Aorta (tissue), 5 donors: ENCODE measurements at regions of chr3 and their contacts with region 1.

Region 1: DNA sequence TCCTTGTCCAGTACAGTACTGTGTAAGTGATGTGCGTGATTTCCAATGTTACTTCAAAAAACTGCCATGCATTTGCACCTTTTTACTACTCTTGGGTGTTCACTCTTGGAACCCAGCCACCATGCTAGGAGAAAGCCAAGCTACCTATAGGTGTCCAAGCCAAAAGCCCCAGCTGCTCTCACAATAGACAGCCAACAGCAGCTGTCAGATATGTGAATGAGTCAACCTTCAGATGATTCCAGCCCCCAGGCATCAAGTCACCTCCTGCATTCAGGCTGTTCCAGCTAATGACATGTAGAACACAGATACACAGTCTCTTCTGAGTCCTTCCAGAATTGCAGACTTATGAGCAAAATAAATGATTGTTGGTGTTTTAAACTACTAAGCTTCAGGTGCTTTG is 417.7 kb upstream of the TGFBR2 start:
- DNase-seq: no peak
- ATAC-seq: no peak
- H3K4me3 ChIP-seq: no peak overlapping the region
- H3K27ac ChIP-seq: no peak overlapping the region
- H3K4me1 ChIP-seq: no peaks in the 10 kb centered on the region
- H3K27me3 ChIP-seq: no peaks in the 10 kb centered on the region

Region 2: DNA sequence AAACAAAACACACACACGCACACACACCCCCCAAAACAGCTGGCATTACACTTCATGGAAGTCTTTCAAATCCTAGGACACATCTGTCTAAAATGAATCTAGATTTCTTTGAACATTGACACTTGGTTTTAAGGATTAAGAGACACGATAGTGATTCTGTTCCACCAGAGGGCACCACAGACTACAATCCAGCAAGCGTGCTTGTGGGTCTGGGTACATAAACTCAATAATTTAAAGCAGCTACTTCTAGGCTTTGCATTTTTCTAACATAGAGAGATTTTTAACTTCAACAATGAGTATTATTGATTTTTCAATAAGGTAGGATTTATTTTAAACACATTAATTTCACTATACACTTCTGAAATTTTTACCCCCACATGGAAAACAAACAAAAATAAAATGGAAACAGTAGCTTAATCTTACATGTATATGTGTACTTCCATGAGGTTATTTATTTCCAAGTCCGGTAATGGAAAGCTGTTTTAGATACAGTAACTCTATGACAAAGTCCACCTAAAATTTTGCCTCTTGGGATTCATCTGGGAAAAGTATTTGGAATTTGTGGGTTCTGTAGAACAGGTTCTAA is 146.3 kb before region 1 on chr3:
- intact Hi-C with region 1: loop called in 1 of 2 experiments (anchors 10 kb)
- DNase-seq: peak in 1 of 2 donors; percentile 60
- ATAC-seq: peak; percentile 71
- H3K4me3 ChIP-seq: no peak overlapping the region
- H3K27ac ChIP-seq: no peak overlapping the region
- H3K4me1 ChIP-seq: no peaks in the 10 kb centered on the region
- H3K27me3 ChIP-seq: no peaks in the 10 kb centered on the region